ENCODE measurements at regions of chr6 and their contacts with region 1.

Region 1: DNA sequence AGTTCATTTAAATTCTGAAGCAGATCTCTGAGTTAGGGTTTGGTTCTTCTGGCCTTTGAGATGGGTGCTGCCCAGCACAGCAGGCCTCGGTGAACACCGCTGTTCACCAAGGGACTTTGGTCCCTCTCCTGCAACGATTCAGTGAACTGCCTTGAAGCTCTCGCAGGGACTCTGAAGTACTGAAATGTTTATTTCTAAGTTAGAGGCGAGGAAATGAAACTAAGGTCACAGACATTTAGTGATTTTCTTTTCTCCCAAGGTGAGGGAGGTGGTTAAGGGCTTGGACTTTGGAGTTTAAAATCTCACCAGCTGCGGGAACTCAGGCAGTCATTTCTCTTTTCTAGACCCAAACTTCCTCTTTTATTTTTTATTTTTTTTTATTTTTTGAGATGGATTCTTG is 26.2 kb downstream of the E2F3 start:
- DNase-seq: no peak
- ATAC-seq: no peak
- H3K4me3 ChIP-seq: no peak overlapping the region
- H3K27ac ChIP-seq: peak overlapping the region; percentile 19; the same call in 1 of the 3 replicates
- H3K4me1 ChIP-seq: peaks cover 36 to 53% of the 10 kb centered on the region in 2 experiments
- H3K27me3 ChIP-seq: no peaks in the 10 kb centered on the region
- CTCF ChIP-seq: no peak
- EP300 ChIP-seq: no peak
- POLR2A ChIP-seq: no peak
- RAD21 ChIP-seq: no peak

Region 2: GRCh38 chr6:18707714-18708439 is 1720.0 kb before region 1 on chr6:
- CTCF ChIA-PET with region 1: no interaction called
- POLR2A ChIA-PET with region 1: no interaction called
- in situ Hi-C with region 1: no loop called
- intact Hi-C with region 1: no loop called
- DNase-seq: no peak
- ATAC-seq: no peak
- H3K4me3 ChIP-seq: no peak overlapping the region
- H3K27ac ChIP-seq: no peak overlapping the region
- H3K4me1 ChIP-seq: no peaks in the 10 kb centered on the region
- H3K27me3 ChIP-seq: no peaks in the 10 kb centered on the region
- CTCF ChIP-seq: no peak
- EP300 ChIP-seq: no peak
- POLR2A ChIP-seq: no peak
- RAD21 ChIP-seq: no peak

Region 3: DNA sequence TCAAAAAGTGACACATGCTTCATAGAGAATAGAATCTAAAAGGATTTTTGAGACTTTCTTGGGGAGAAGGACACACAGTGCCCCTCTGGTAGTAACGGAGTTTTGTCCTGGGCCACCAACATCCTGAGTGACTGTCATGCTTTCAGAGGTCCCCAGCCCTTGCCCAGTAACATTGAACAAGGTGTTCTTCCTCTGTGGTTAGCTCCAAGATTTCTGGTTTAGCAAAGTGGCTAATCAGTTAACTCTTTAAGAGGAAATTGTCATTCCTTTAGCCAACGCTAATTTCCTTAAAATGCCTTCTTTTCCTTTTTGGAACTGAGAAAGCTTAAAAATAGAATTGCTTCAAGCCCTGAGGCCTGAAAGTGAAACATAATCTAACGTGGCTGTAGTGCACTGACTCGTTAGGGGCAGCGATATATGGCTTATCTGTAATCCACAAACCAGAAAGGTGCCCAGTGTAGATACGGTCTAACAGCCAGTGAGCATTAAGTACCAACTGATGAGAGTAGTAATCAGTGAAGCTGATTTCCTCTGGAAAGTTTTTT is 18.4 kb before region 1 on chr6:
- CTCF ChIA-PET with region 1: no interaction called
- POLR2A ChIA-PET with region 1: interaction called, 21 read pairs
- in situ Hi-C with region 1: no loop called
- intact Hi-C with region 1: no loop called
- DNase-seq: peak in 2 of 4 experiments; percentile 64 to 87
- ATAC-seq: peak; percentile 66
- H3K4me3 ChIP-seq: peak overlapping the region; percentile 1; the same call in 1 of the 2 replicates
- H3K27ac ChIP-seq: peak overlapping the region; percentile 69
- H3K4me1 ChIP-seq: peaks cover 31 to 86% of the 10 kb centered on the region in 2 experiments
- H3K27me3 ChIP-seq: no peaks in the 10 kb centered on the region
- CTCF ChIP-seq: peak in 1 of 3 experiments; percentile 4; a peak in 1 of 6 replicates
- EP300 ChIP-seq: peak; percentile 96
- POLR2A ChIP-seq: no peak
- RAD21 ChIP-seq: no peak

Region 4: DNA sequence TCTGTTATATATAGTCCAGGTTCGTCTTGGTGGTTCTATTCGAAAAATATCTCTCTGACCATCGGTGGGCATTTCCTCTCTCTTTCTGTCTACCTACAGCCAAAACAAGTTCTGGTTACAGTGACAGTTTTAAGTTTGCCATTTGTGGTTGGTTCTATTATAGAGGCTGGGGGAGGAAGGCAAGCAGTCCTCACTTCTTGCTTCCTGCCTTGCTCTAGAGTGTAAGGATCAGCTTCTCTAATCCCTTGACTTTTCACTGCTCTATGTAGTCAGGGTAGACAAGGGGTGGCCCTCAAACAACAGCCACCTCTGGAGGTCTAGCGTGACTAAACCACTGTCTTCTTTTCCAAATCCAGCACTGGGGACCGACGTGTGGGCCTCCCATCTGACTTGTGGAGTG is 10.0 kb before region 1 on chr6:
- CTCF ChIA-PET with region 1: no interaction called
- POLR2A ChIA-PET with region 1: interaction called, 13 read pairs
- in situ Hi-C with region 1: no loop called
- intact Hi-C with region 1: loop called (anchors 1 kb)
- DNase-seq: peak in 2 of 4 experiments; percentile 82 to 88
- ATAC-seq: peak; percentile 87
- H3K4me3 ChIP-seq: no peak overlapping the region; the same call in 1 of the 2 replicates
- H3K27ac ChIP-seq: peak overlapping the region; percentile 76
- H3K4me1 ChIP-seq: peaks cover 26 to 64% of the 10 kb centered on the region in 2 experiments
- H3K27me3 ChIP-seq: no peaks in the 10 kb centered on the region
- CTCF ChIP-seq: peak in 2 of 3 experiments; percentile 14 to 24; a peak in 2 of 6 replicates
- EP300 ChIP-seq: peak; percentile 65; the same call in 1 of the 2 replicates
- POLR2A ChIP-seq: peak; percentile 52
- RAD21 ChIP-seq: peak; percentile 25 to 52; a peak in 3 of 4 replicates

Region 5: GRCh38 chr6:20444786-20445271 is 17.0 kb after region 1 on chr6:
- CTCF ChIA-PET with region 1: no interaction called
- POLR2A ChIA-PET with region 1: interaction called, 13 read pairs
- in situ Hi-C with region 1: no loop called
- intact Hi-C with region 1: no loop called
- DNase-seq: peak; percentile 60 to 94 (median 74)
- ATAC-seq: peak; percentile 89
- H3K4me3 ChIP-seq: no peak overlapping the region
- H3K27ac ChIP-seq: peak overlapping the region; percentile 70
- H3K4me1 ChIP-seq: peaks cover 21 to 48% of the 10 kb centered on the region in 2 experiments; a peak in 4 of 5 replicates
- H3K27me3 ChIP-seq: no peaks in the 10 kb centered on the region
- CTCF ChIP-seq: no peak
- EP300 ChIP-seq: peak; percentile 87; the same call in 1 of the 2 replicates
- POLR2A ChIP-seq: no peak
- RAD21 ChIP-seq: no peak

Region 6: GRCh38 chr6:20582586-20583446 is 155.0 kb after region 1 on chr6:
- CTCF ChIA-PET with region 1: no interaction called
- POLR2A ChIA-PET with region 1: no interaction called
- in situ Hi-C with region 1: no loop called
- intact Hi-C with region 1: no loop called
- DNase-seq: no peak
- ATAC-seq: no peak
- H3K4me3 ChIP-seq: no peak overlapping the region
- H3K27ac ChIP-seq: no peak overlapping the region
- H3K4me1 ChIP-seq: no peaks in the 10 kb centered on the region; a peak in 1 of 5 replicates
- H3K27me3 ChIP-seq: no peaks in the 10 kb centered on the region
- CTCF ChIP-seq: no peak
- EP300 ChIP-seq: no peak
- POLR2A ChIP-seq: no peak
- RAD21 ChIP-seq: no peak

Measured in K562 (cell line).